Activated CD4-positive, alpha-beta memory T cell treated with anti-CD3 and anti-CD28 coated beads for 36 hours (primary cell): ENCODE measurements at regions of chr19 and their contacts with region 1.

Region 1: GRCh38 chr19:48333467-48334384 is 8.4 kb downstream of the EMP3 start:
- DNase-seq: peak; percentile 95
- H3K4me3 Mint-ChIP-seq: peak overlapping the region; percentile 92
- H3K27ac Mint-ChIP-seq: peak overlapping the region; percentile 97
- H3K4me1 Mint-ChIP-seq: peaks cover 46% of the 10 kb centered on the region
- H3K27me3 Mint-ChIP-seq: no peaks in the 10 kb centered on the region

Region 2: DNA sequence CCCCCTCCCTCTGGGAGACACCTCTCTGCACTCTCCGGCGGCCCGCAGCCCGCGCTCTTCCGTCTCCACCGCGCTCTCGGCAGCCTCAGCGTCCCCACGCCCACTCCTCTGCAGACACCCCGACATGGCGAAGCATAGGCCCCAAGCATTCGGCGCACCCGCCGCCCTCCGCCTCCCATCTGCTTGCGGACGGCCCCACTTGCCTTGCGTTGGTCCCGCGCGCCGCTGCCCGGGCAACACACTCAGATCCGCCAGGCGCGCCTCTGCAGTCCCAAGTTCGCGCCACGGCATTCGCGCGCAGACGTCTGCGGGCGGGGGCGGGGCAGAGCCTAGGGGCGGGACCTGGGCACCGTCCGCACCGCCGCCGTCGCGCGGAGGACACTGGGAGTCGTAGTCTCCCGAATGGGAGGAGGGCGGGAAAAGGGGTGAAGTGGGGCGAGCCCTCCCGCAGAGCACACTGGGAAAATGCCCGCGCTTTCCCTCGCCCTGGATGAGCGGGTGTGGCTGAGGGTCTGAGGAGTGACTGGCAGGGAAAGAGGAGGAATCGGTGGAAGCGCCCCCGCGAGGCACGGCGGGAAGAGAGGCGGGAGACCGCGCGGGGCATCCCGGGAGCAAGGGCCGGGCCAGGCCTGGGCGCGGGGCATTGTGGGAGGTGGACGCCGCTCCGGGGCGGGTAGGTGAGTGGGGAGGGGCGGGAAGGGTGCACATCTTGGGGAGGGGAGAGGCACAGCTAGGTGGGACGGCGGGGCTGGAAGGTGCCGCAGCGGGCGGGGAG is 163.5 kb before region 1 on chr19 and contains the starts of genes LIG1 and ZSWIM9:
- CTCF ChIA-PET with region 1: interaction called, 3 read pairs
- POLR2A ChIA-PET with region 1: no interaction called
- intact Hi-C with region 1: loop called (anchors 5 kb)
- DNase-seq: peak; percentile 94
- H3K4me3 Mint-ChIP-seq: peak within 1 kb of the TSS; percentile 95
- H3K27ac Mint-ChIP-seq: peak within 1 kb of the TSS; percentile 97
- H3K4me1 Mint-ChIP-seq: peaks cover 39% of the 10 kb centered on the region
- H3K27me3 Mint-ChIP-seq: no peaks in the 10 kb centered on the region
- total RNA-seq, gene LIG1: 174 TPM
- total RNA-seq, gene ZSWIM9: 7.4 to 8.0 TPM

Region 3: GRCh38 chr19:48321622-48322591 is 11.8 kb before region 1 on chr19:
- CTCF ChIA-PET with region 1: interaction called, 354 read pairs
- POLR2A ChIA-PET with region 1: interaction called, 41 read pairs
- intact Hi-C with region 1: loop called (anchors 1 kb)
- DNase-seq: peak; percentile 99
- H3K4me3 Mint-ChIP-seq: peak overlapping the region; percentile 88
- H3K27ac Mint-ChIP-seq: peak overlapping the region; percentile 99
- H3K4me1 Mint-ChIP-seq: peaks cover 51% of the 10 kb centered on the region
- H3K27me3 Mint-ChIP-seq: no peaks in the 10 kb centered on the region

Region 4: GRCh38 chr19:48391107-48391986 is 57.6 kb after region 1 on chr19 and contains the start of gene KDELR1:
- CTCF ChIA-PET with region 1: interaction called, 24 read pairs
- POLR2A ChIA-PET with region 1: interaction called, 4 read pairs
- intact Hi-C with region 1: loop called (anchors 5 kb)
- DNase-seq: peak; percentile 80
- H3K4me3 Mint-ChIP-seq: peak within 1 kb of the TSS; percentile 90
- H3K27ac Mint-ChIP-seq: peak within 1 kb of the TSS; percentile 87
- H3K4me1 Mint-ChIP-seq: peaks cover 25% of the 10 kb centered on the region
- H3K27me3 Mint-ChIP-seq: peaks cover 23% of the 10 kb centered on the region
- total RNA-seq, gene KDELR1: 82.9 to 88.1 TPM

Region 5: DNA sequence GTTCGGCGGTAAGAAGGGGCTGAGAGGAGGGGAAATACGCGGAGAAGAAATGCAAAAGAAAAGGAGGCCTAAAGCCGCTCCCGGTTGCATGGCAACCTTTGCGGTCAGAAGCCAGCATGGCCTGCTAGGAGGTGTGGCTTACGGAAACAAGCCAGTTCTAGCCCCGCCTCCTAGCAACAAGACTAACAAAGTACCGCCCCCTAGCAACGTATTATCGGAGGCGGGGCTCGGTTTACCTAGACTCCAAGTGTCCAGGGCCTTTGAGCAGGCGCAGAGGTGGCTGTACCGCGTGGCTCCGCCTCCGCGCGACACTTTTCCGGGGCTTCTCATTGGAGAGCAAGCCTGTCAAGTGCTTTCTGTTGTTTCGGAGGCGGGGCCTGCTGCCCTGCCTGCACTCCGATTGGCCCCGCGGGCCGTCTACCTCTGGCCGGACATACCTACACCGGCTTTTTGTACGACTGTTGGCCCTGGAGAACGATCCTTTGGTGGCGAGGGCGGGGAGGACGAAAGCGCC is 135.1 kb after region 1 on chr19:
- CTCF ChIA-PET with region 1: no interaction called
- POLR2A ChIA-PET with region 1: no interaction called
- intact Hi-C with region 1: loop called (anchors 2 kb)
- DNase-seq: peak; percentile 100
- H3K4me3 Mint-ChIP-seq: peak overlapping the region; percentile 83
- H3K27ac Mint-ChIP-seq: peak overlapping the region; percentile 84
- H3K4me1 Mint-ChIP-seq: peaks cover 22% of the 10 kb centered on the region
- H3K27me3 Mint-ChIP-seq: no peaks in the 10 kb centered on the region

Region 6: DNA sequence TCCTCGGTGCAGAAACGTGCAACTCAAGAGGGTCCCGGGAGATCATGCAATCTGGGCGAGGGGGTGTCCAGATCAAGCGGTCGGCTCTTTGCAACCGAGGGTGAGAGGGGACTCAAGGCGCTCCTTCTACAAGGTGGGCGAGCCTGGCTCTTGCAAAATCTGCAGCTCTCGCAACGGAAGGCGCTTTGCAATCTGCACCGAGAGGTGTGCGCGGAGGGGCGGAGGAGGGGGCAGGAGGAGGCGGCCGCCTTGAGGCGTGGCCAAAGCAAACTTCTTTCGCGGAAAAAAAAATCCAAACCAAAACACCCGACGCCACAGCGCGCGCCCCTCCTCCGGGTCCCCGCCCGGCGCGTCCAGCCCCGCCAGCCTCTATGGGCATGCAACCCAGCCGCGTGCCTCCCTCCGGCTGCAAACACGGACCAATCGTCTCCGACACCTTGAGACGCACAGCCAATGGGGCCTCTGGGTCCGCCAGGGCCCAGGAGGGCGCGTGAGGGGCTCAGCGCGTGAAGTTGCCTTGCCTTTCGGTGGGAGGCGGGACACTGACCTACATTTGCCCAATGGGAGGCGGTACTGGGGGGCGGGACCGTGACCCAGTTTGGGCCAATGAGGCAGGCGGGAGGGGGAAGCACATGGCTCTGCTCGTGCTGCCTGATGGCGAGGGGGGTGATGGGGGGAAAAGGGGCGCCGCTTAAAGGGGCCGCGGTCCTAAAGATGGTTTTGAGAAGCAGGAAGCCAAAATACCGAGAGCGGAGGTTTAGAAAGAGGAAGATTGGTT is 303.6 kb after region 1 on chr19 and contains the start of gene DBP:
- CTCF ChIA-PET with region 1: no interaction called
- POLR2A ChIA-PET with region 1: no interaction called
- intact Hi-C with region 1: loop called (anchors 2 kb)
- DNase-seq: peak; percentile 99
- H3K4me3 Mint-ChIP-seq: peak within 1 kb of the TSS; percentile 87
- H3K27ac Mint-ChIP-seq: peak within 1 kb of the TSS; percentile 98
- H3K4me1 Mint-ChIP-seq: peaks cover 48% of the 10 kb centered on the region
- H3K27me3 Mint-ChIP-seq: no peaks in the 10 kb centered on the region
- total RNA-seq, gene DBP: 8.3 to 10.4 TPM